Psoas muscle (tissue), 8 donors: ENCODE measurements at regions of chr9 and their contacts with region 1.

Region 1: DNA sequence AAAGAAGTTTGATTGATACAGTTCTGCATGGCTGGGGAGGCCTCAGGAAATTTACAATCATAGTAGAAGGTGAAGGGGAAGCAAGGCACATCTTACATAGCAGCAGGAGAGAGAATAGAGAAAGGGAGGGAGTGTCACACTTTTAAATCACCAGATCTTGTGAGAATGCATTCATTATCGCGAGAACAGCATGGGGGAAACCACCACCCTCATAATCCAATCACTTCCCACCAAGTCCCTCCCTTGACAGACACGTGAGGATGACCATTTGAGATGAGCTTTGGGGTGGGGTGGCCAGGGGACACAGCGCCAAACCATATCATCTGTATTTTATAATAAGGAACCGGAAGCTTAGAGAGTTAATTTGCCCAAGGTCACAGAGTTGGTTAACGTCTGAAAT is 13.7 kb upstream of the FOCAD start:
- DNase-seq: no peak
- ATAC-seq: no peak
- H3K4me3 ChIP-seq: no peak overlapping the region
- H3K27ac ChIP-seq: no peak overlapping the region
- H3K4me1 ChIP-seq: no peaks in the 10 kb centered on the region
- H3K27me3 ChIP-seq: no peaks in the 10 kb centered on the region
- CTCF ChIP-seq: no peak

Region 2: DNA sequence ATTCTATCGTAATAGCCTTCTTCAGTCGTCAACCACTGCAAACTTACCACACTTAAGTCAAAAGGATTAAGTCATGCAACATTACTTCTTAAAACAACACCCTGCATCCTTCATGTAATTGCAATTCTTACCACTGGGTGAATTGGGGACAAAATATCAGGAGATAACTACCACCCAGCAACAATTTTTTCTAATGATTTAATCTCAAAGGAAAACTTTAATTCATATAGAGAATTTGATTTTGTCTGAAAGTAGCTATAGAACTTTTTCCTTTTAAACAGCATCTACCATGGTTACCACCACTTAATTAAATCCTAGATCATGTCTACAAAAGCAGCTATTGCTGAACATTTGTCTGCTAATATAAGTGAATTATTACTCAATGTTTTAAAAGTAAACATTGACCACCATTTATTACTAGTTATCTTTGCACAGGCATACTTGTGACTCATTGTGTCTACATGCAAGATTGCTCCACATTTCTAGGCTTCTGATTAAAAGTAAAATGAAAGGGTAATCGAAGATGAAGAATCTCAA is 58.6 kb before region 1 on chr9:
- intact Hi-C with region 1: no loop called
- DNase-seq: no peak
- ATAC-seq: peak in 1 of 4 donors; percentile 76
- H3K4me3 ChIP-seq: no peak overlapping the region
- H3K27ac ChIP-seq: no peak overlapping the region
- H3K4me1 ChIP-seq: peaks cover 11% of the 10 kb centered on the region
- H3K27me3 ChIP-seq: no peaks in the 10 kb centered on the region
- CTCF ChIP-seq: peak; percentile 44

Region 3: DNA sequence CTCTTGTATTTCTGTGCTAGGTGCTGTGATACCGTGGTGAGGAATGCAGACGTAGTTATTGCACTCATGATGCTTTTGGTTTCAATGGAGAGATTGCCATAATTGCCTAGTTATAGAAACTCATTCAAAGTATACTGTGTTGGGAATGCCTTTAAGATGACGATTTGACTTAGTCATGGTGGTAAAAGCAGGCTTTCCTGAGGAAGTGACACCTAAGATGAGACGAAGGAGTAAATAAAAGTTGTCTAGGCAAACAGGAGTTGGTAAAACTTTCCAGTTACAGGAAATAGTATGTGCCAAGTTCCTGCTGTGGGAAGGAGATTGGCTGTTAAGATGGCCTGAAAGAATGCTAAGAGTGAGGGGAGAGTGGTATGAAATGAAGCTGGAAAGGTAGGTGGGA is 61.7 kb after region 1 on chr9:
- intact Hi-C with region 1: loop called in 1 of 2 experiments (anchors 10 kb)
- DNase-seq: no peak
- ATAC-seq: no peak
- H3K4me3 ChIP-seq: no peak overlapping the region
- H3K27ac ChIP-seq: no peak overlapping the region
- H3K4me1 ChIP-seq: no peaks in the 10 kb centered on the region
- H3K27me3 ChIP-seq: no peaks in the 10 kb centered on the region
- CTCF ChIP-seq: no peak

Region 4: GRCh38 chr9:20929276-20929675 is 258.9 kb after region 1 on chr9:
- intact Hi-C with region 1: no loop called
- DNase-seq: no peak
- ATAC-seq: no peak
- H3K4me3 ChIP-seq: no peak overlapping the region
- H3K27ac ChIP-seq: no peak overlapping the region
- H3K4me1 ChIP-seq: no peaks in the 10 kb centered on the region
- H3K27me3 ChIP-seq: no peaks in the 10 kb centered on the region
- CTCF ChIP-seq: no peak